PC-9 (cell line): ENCODE measurements at regions of chr4 and their contacts with region 1.

Region 1: GRCh38 chr4:142817442-142817841 is 28.7 kb downstream of the INPP4B start:
- DNase-seq: peak; percentile 59 to 80
- H3K4me3 ChIP-seq: peak overlapping the region; percentile 10; the same call in 1 of the 2 replicates
- H3K27ac ChIP-seq: peak overlapping the region; percentile 50
- H3K4me1 ChIP-seq: peaks cover 15% of the 10 kb centered on the region
- H3K27me3 ChIP-seq: no peaks in the 10 kb centered on the region
- CTCF ChIP-seq: no peak

Region 2: GRCh38 chr4:142600971-142601370 is 216.5 kb before region 1 on chr4:
- CTCF ChIA-PET with region 1: no interaction called
- POLR2A ChIA-PET with region 1: interaction called, 15 read pairs
- intact Hi-C with region 1: no loop called
- DNase-seq: peak in 1 of 2 experiments; percentile 74
- H3K4me3 ChIP-seq: peak overlapping the region; percentile 3; the same call in 1 of the 2 replicates
- H3K27ac ChIP-seq: peak overlapping the region; percentile 58
- H3K4me1 ChIP-seq: peaks cover 19% of the 10 kb centered on the region
- H3K27me3 ChIP-seq: no peaks in the 10 kb centered on the region
- CTCF ChIP-seq: no peak

Region 3: GRCh38 chr4:142719854-142720541 is 97.4 kb before region 1 on chr4:
- CTCF ChIA-PET with region 1: interaction called, 4 read pairs
- POLR2A ChIA-PET with region 1: interaction called, 5 read pairs
- intact Hi-C with region 1: loop called (anchors 5 kb)
- DNase-seq: peak in 1 of 2 experiments; percentile 65
- H3K4me3 ChIP-seq: no peak overlapping the region
- H3K27ac ChIP-seq: peak overlapping the region; percentile 64
- H3K4me1 ChIP-seq: peaks cover 16% of the 10 kb centered on the region
- H3K27me3 ChIP-seq: no peaks in the 10 kb centered on the region
- CTCF ChIP-seq: peak; percentile 63